ENCODE measurements at regions of chr12 and their contacts with region 1.

Region 1: GRCh38 chr12:8078398-8078797 is 3.7 kb upstream of the NECAP1 start:
- DNase-seq: peak; percentile 66
- H3K4me3 ChIP-seq: no peak overlapping the region
- H3K27ac ChIP-seq: no peak overlapping the region
- H3K4me1 ChIP-seq: peaks cover 21% of the 10 kb centered on the region
- CTCF ChIP-seq: peak; percentile 73

Region 2: GRCh38 chr12:7189398-7190267 is 888.8 kb before region 1 on chr12 and contains the start of gene PEX5:
- CTCF ChIA-PET with region 1: no interaction called
- POLR2A ChIA-PET with region 1: interaction called, 3 read pairs
- intact Hi-C with region 1: loop called (anchors 5 kb)
- DNase-seq: peak; percentile 98
- H3K4me3 ChIP-seq: peak within 1 kb of the TSS; percentile 85
- H3K27ac ChIP-seq: peak within 1 kb of the TSS; percentile 72
- H3K4me1 ChIP-seq: peaks cover 26% of the 10 kb centered on the region
- CTCF ChIP-seq: no peak
- total RNA-seq, gene PEX5: 45.6 and 54.4 TPM in 2 replicates

Region 3: GRCh38 chr12:7638760-7639555 is 439.4 kb before region 1 on chr12:
- CTCF ChIA-PET with region 1: no interaction called
- POLR2A ChIA-PET with region 1: no interaction called
- intact Hi-C with region 1: loop called (anchors 2 kb)
- DNase-seq: peak; percentile 93
- H3K4me3 ChIP-seq: no peak overlapping the region
- H3K27ac ChIP-seq: peak overlapping the region; percentile 13
- H3K4me1 ChIP-seq: peaks cover 53% of the 10 kb centered on the region
- CTCF ChIP-seq: peak; percentile 88

Region 4: DNA sequence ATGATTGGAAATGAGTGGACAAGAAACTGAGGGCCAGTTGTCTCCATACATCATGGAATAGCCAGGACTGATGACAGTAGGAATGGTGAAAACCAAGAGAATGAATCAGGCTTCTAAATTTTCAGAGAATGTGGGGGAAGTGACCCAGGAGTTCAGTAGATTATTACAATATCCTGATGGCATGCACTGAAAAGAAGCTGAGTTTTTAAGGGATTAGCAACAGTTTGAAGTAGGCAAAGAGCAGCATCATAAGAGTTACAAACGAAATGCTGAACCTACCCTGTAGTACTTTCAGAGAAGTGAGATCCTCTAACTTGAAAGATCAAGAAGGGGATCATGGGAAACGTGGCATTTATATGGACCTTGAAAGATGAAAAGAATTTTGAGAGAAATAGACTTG is 218.8 kb before region 1 on chr12:
- CTCF ChIA-PET with region 1: no interaction called
- POLR2A ChIA-PET with region 1: no interaction called
- intact Hi-C with region 1: loop called (anchors 2 kb)
- DNase-seq: no peak
- H3K4me3 ChIP-seq: no peak overlapping the region
- H3K27ac ChIP-seq: no peak overlapping the region
- H3K4me1 ChIP-seq: no peaks in the 10 kb centered on the region
- CTCF ChIP-seq: no peak

Region 5: DNA sequence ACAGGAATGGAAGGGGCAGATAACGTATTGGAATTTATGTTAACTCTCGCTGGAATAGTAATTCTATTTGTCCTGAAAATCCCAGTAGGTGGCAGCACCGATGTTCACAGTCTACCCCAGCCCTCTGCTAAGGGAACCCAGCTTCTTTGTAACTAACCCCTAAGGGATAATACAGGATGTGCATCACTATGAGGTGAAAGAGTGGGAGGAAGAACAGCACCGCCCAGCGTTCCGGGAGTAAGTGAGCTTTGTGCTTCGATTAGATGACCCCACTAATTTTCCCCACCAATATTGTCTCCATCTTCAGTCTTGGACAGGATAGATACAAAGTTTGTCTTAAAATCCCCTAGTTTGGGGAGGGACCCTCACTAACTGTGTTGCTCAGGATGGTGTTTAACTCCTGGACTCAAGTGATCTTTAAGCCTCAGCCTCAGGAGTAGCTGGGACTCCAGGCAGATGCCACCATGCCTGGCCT is 145.1 kb before region 1 on chr12:
- CTCF ChIA-PET with region 1: interaction called, 5 read pairs
- POLR2A ChIA-PET with region 1: no interaction called
- intact Hi-C with region 1: loop called (anchors 1 kb)
- DNase-seq: peak; percentile 92
- H3K4me3 ChIP-seq: peak overlapping the region; percentile 72
- H3K27ac ChIP-seq: peak overlapping the region; percentile 54
- H3K4me1 ChIP-seq: peaks cover 27% of the 10 kb centered on the region
- CTCF ChIP-seq: peak; percentile 93

Region 6: GRCh38 chr12:8026291-8026900 is 52.0 kb before region 1 on chr12:
- CTCF ChIA-PET with region 1: no interaction called
- POLR2A ChIA-PET with region 1: no interaction called
- intact Hi-C with region 1: loop called (anchors 2 kb)
- DNase-seq: peak; percentile 98
- H3K4me3 ChIP-seq: peak overlapping the region; percentile 71
- H3K27ac ChIP-seq: peak overlapping the region; percentile 84
- H3K4me1 ChIP-seq: peaks cover 5% of the 10 kb centered on the region
- CTCF ChIP-seq: no peak

Region 7: DNA sequence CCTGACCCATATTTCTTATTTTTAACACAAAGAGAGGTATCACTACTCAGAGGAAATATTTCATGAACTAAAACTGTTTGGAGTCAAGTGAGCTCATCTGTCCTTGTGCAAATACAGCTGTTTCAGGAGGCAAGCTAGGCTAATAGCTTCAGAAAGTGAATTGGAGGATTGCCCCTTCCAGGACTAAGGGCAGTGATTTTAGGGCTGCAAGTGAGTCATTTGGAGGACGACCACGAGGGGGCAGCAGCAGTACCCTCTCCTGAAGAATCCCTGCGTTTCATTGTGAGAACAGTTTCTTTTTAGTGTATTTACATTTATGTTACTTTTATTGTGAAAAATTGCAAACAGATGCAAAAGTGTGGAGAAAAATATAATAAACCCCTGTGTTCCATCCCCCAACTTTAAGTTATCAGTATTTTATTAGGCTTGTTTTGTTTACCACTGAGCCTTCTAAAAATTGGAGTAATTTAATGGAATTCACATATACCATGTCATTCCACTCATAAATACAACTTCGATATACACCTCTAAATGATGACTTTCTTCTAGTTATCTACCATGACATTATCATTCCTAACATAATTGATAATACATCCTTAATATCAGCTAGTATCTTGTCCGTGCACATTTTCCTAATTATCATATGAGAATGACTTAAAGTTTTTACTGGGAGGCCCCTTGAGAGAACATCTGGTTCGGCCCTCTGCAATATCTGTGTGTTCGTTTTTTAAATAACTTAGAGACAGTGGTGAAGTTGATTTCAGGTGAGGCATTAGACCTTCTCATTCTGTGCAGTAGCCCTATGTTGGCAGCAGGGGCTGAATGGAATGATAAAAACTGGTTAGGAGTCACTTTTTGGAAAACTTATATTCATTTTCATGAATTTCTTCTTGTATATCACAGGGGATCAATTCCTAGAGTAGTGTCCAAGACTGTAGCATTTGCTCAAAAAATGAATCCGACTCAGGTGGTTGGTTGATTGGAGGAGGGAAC is 32.1 kb before region 1 on chr12:
- CTCF ChIA-PET with region 1: interaction called, 4 read pairs
- POLR2A ChIA-PET with region 1: no interaction called
- intact Hi-C with region 1: loop called (anchors 2 kb)
- DNase-seq: peak; percentile 72
- H3K4me3 ChIP-seq: no peak overlapping the region
- H3K27ac ChIP-seq: no peak overlapping the region
- H3K4me1 ChIP-seq: peaks cover 2% of the 10 kb centered on the region
- CTCF ChIP-seq: peak; percentile 95

Measured in OCI-LY7 (cell line).